Posterior cingulate gyrus (tissue), 11 donors: ENCODE measurements at regions of chr19 and their contacts with region 1.

Region 1: GRCh38 chr19:45886427-45887199 is 672 bp upstream of the IRF2BP1 start:
- DNase-seq: peak; percentile 86 to 98 (median 90)

Region 2: GRCh38 chr19:45848922-45849321 is 37.7 kb before region 1 on chr19:
- intact Hi-C with region 1: no loop called
- DNase-seq: peak in 1 of 10 donors; percentile 31

Region 3: DNA sequence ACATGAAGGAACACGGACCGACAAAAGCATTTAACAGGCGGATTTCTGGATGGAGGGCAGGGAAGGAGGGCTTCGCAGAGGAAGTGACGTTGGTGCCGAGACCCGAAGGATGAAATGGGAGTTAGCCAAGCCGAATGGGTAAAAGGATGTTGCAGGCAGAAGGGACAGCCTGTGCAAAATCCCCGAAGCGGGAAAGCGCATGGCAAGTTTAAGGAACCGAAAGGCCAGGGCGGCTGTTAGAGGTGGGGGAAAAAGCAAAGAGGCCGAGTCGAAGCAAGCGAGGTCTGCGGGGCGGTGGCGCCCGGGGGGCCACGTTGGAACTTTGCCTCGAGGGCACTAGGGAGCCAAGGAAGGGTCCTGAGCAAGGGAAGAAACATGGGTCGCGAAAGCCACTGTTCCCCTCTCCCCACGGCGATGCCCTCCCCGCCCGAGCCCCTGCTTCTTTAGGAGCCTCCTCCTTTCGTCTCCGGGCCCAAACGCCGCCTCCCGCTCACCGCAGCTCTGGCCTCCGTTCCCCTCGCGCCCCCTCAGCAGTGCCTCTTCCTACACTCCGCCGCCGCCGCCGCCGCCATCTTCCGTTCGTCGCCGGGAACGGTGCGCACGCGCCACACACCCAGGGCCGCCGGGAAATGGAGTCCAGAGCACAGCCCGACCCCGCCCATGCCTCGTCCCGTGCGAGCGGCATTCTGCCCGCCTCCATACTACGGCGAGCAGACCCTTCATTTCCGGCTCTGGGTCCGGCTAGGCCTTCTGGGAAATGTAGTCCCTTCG is 23.9 kb before region 1 on chr19 and contains the start of gene SYMPK:
- intact Hi-C with region 1: loop called (anchors 2 kb)
- DNase-seq: peak; percentile 98 to 100 (median 99)

Region 4: GRCh38 chr19:45902651-45903625 is 16.3 kb after region 1 on chr19:
- intact Hi-C with region 1: loop called (anchors 2 kb)
- DNase-seq: peak; percentile 95 to 100 (median 98)